H1 (cell line): ENCODE measurements at regions of chr16 and their contacts with region 1.

Region 1: GRCh38 chr16:66608241-66609138 is 4.0 kb downstream of the CMTM3 start:
- DNase-seq: peak; percentile 78 to 96
- H3K4me3 ChIP-seq: no peak overlapping the region
- H3K27ac ChIP-seq: no peak overlapping the region
- H3K4me1 ChIP-seq: peaks cover 0 to 27% (median 13%) of the 10 kb centered on the region in 4 experiments; a peak in 6 of 7 replicates
- H3K27me3 ChIP-seq: no peaks in the 10 kb centered on the region
- CTCF ChIP-seq: peak; percentile 79 to 94 (median 92)
- EP300 ChIP-seq: no peak
- POLR2A ChIP-seq: no peak
- RAD21 ChIP-seq: peak; percentile 79 to 81

Region 2: GRCh38 chr16:66596986-66597848 is 11.3 kb before region 1 on chr16:
- CTCF ChIA-PET with region 1: interaction called, 12 read pairs
- POLR2A ChIA-PET with region 1: interaction called, 4 read pairs
- DNase-seq: no peak
- H3K4me3 ChIP-seq: no peak overlapping the region
- H3K27ac ChIP-seq: no peak overlapping the region
- H3K4me1 ChIP-seq: no peaks in the 10 kb centered on the region
- H3K27me3 ChIP-seq: no peaks in the 10 kb centered on the region
- CTCF ChIP-seq: no peak
- EP300 ChIP-seq: no peak
- POLR2A ChIP-seq: no peak
- RAD21 ChIP-seq: no peak

Region 3: GRCh38 chr16:66639091-66639885 is 30.8 kb after region 1 on chr16:
- CTCF ChIA-PET with region 1: interaction called, 17 read pairs
- POLR2A ChIA-PET with region 1: no interaction called
- DNase-seq: no peak
- H3K4me3 ChIP-seq: no peak overlapping the region
- H3K27ac ChIP-seq: no peak overlapping the region
- H3K4me1 ChIP-seq: peaks cover 0 to 5% (median 2%) of the 10 kb centered on the region in 4 experiments; a peak in 2 of 7 replicates
- H3K27me3 ChIP-seq: no peaks in the 10 kb centered on the region
- CTCF ChIP-seq: no peak
- EP300 ChIP-seq: no peak
- POLR2A ChIP-seq: no peak
- RAD21 ChIP-seq: no peak

Region 4: DNA sequence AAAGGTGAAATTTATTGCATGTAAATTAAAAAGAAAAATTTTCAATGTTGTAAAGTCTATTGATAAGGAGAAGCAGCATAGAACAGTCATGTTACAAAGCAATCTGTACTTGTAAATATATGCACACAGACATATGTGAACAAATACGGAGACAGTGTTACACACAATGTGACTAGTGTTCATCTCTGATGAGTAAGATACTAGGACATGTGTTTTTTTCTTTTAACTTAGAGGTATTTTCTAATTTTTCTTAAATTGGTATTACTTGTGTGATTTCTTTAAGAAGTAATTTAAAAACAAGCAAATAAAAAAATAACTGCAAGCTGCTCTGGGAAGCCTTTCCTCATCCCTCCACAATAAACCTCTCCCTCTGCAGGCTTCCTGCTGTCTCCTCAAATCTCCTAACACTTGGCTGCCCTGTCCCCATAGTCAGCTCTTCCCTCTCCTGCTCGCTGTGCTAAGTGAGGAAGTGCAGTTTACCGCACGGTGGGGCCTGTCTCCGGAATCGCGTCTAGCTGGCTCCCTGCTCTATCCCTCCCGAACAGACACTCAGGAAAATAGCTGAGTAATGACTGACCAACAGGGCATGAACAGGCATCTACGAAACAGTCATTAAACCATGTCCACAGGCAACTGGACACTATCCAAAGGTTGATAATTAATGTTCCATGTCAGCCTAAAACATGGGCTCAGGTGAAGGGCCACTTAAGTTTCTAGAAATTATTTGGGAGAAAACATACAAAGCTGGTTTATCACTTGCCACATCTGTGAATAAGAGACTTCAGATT is 52.1 kb after region 1 on chr16:
- CTCF ChIA-PET with region 1: interaction called, 17 read pairs
- POLR2A ChIA-PET with region 1: interaction called, 3 read pairs
- DNase-seq: no peak
- H3K4me3 ChIP-seq: no peak overlapping the region
- H3K27ac ChIP-seq: no peak overlapping the region
- H3K4me1 ChIP-seq: no peaks in the 10 kb centered on the region
- H3K27me3 ChIP-seq: no peaks in the 10 kb centered on the region
- CTCF ChIP-seq: no peak
- EP300 ChIP-seq: no peak
- POLR2A ChIP-seq: no peak
- RAD21 ChIP-seq: no peak